A673 (cell line): ENCODE measurements at regions of chr1 and their contacts with region 1.

Region 1: DNA sequence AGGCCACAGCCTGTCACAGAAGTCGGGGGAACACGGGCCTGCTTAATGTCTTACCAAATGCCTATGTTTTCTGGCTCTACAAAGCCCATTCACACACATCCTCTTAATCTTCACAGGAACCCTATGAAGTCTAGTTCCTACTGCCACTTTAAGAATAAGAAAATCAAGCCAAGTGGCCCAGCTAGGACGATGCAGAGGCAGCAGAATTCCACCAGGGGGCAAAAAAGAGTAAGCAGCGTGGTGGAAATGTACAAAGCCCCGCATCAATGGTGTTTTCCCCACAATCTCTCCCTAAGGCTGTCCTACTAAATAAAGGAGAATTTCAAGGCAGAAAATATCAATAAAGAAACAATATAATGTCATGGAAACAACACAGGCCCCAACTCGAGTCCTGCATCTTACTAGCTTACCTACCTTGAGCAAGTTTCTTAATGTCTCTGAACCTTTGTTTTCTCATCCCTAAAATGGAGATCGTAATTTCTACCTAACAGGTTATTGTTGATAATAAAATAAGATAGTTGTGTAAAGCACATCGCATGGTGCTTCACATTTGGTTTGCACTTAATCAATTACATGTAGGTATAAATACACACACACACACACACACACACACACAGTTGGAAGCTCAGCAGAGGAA is 21.4 kb downstream of the SEC16B start:
- DNase-seq: peak; percentile 93
- H3K4me3 ChIP-seq: no peak overlapping the region
- H3K27ac ChIP-seq: no peak overlapping the region
- H3K4me1 ChIP-seq: peaks cover 49% of the 10 kb centered on the region
- H3K27me3 ChIP-seq: no peaks in the 10 kb centered on the region
- CTCF ChIP-seq: peak; percentile 95

Region 2: GRCh38 chr1:176843352-176844297 is 1104.8 kb before region 1 on chr1:
- CTCF ChIA-PET with region 1: no interaction called
- POLR2A ChIA-PET with region 1: no interaction called
- intact Hi-C with region 1: loop called (anchors 5 kb)
- DNase-seq: peak; percentile 65
- H3K4me3 ChIP-seq: no peak overlapping the region
- H3K27ac ChIP-seq: no peak overlapping the region
- H3K4me1 ChIP-seq: peaks cover 3% of the 10 kb centered on the region
- H3K27me3 ChIP-seq: no peaks in the 10 kb centered on the region
- CTCF ChIP-seq: peak; percentile 59

Region 3: DNA sequence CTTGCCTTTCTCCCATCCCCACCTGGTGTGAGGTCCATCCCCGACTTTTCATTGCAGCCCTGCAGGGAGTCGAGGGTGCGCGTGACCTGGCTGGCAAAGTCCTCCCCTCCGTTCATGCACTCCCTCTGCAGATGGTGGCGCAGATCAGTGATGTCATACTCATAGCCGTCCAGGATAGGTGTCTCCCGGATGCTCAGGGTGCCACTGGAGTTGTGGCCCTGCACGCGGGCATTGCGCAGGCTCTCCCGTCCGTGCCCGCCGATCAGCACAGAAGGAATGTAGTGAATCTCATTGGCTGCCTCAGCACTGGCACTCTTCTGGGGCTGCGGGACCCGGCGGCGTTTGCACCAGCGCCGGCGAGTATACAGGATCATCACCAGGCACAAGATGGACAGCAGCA is 916.0 kb before region 1 on chr1:
- CTCF ChIA-PET with region 1: no interaction called
- POLR2A ChIA-PET with region 1: no interaction called
- intact Hi-C with region 1: loop called (anchors 10 kb)
- DNase-seq: no peak
- H3K4me3 ChIP-seq: no peak overlapping the region
- H3K27ac ChIP-seq: no peak overlapping the region
- H3K4me1 ChIP-seq: no peaks in the 10 kb centered on the region
- H3K27me3 ChIP-seq: no peaks in the 10 kb centered on the region
- CTCF ChIP-seq: no peak

Region 4: DNA sequence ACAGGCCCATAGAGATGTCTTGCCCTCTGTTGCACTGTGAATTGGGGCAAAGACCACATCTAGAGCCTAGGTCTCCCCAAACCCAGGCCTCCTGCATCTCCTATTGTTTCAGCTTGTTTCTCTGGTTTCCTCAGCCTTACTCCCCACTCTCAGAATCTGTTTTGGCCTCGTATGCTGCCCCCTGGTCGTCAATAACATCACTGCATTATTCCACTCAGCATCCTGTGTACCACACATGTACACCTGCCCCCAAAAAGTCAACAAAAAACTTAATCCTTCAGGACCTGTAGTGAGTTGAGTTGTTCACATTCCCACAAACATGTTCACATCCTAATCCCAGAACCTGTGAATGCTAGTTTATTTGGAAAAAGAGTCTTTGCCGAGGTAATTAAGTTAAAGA is 592.9 kb before region 1 on chr1:
- CTCF ChIA-PET with region 1: no interaction called
- POLR2A ChIA-PET with region 1: no interaction called
- intact Hi-C with region 1: loop called (anchors 10 kb)
- DNase-seq: peak; percentile 41
- H3K4me3 ChIP-seq: no peak overlapping the region
- H3K27ac ChIP-seq: no peak overlapping the region
- H3K4me1 ChIP-seq: peaks cover 10% of the 10 kb centered on the region
- H3K27me3 ChIP-seq: no peaks in the 10 kb centered on the region
- CTCF ChIP-seq: peak; percentile 65

Region 5: GRCh38 chr1:177732178-177732577 is 216.3 kb before region 1 on chr1:
- CTCF ChIA-PET with region 1: interaction called, 3 read pairs
- POLR2A ChIA-PET with region 1: no interaction called
- intact Hi-C with region 1: loop called (anchors 1 kb)
- DNase-seq: peak; percentile 83
- H3K4me3 ChIP-seq: peak overlapping the region; percentile 50
- H3K27ac ChIP-seq: peak overlapping the region; percentile 97
- H3K4me1 ChIP-seq: peaks cover 49% of the 10 kb centered on the region
- H3K27me3 ChIP-seq: no peaks in the 10 kb centered on the region
- CTCF ChIP-seq: no peak

Region 6: GRCh38 chr1:178282949-178283367 is 334.5 kb after region 1 on chr1:
- CTCF ChIA-PET with region 1: no interaction called
- POLR2A ChIA-PET with region 1: no interaction called
- intact Hi-C with region 1: loop called (anchors 1 kb)
- DNase-seq: peak; percentile 46
- H3K4me3 ChIP-seq: no peak overlapping the region
- H3K27ac ChIP-seq: no peak overlapping the region
- H3K4me1 ChIP-seq: no peaks in the 10 kb centered on the region
- H3K27me3 ChIP-seq: no peaks in the 10 kb centered on the region
- CTCF ChIP-seq: peak; percentile 58

Region 7: GRCh38 chr1:178379807-178380206 is 431.4 kb after region 1 on chr1:
- CTCF ChIA-PET with region 1: no interaction called
- POLR2A ChIA-PET with region 1: no interaction called
- intact Hi-C with region 1: no loop called
- DNase-seq: no peak
- H3K4me3 ChIP-seq: no peak overlapping the region
- H3K27ac ChIP-seq: no peak overlapping the region
- H3K4me1 ChIP-seq: no peaks in the 10 kb centered on the region
- H3K27me3 ChIP-seq: no peaks in the 10 kb centered on the region
- CTCF ChIP-seq: peak; percentile 35; the same call in 1 of the 2 replicates